PC-9 (cell line): ENCODE measurements at regions of chr6 and their contacts with region 1.

Region 1: DNA sequence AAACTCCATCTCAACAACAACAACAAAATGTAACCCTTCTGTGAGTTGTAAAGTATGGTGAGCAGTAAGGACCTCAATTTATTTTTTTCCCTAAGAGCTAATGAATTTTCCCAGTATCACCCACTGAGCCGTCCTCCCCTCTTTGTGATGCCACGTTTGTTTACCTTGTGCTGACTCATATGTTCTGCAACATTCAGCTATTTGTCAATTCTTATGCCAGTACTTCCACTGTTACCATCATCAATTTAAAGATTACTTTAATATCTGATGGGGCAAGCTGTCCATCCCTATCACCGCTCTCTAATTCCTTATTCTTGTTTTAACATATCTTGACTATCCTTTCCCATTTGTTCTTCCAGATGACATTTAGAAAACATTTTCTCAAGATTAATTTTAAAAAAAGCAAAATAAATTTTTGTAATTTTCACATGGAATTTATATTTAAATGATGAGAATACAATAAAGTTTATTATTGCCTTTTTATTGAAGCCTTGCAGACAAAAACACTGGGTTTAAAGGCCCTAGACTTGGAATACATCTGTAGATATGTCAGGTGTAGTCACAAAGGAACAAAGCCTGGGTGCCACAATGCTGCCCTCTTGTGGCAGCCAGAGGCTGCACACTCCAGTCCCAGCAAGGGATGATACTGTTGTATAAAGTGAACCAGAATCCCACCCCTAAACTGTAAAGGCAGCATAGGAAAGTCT is 37.4 kb downstream of the MAK start:
- DNase-seq: peak; percentile 66 to 70
- H3K4me3 ChIP-seq: no peak overlapping the region
- H3K27ac ChIP-seq: peak overlapping the region; percentile 41; the same call in 1 of the 2 replicates
- H3K4me1 ChIP-seq: peaks cover 8% of the 10 kb centered on the region
- H3K27me3 ChIP-seq: no peaks in the 10 kb centered on the region
- CTCF ChIP-seq: peak; percentile 94

Region 2: GRCh38 chr6:10434692-10435376 is 366.1 kb before region 1 on chr6:
- CTCF ChIA-PET with region 1: no interaction called
- POLR2A ChIA-PET with region 1: no interaction called
- intact Hi-C with region 1: loop called (anchors 2 kb)
- DNase-seq: no peak
- H3K4me3 ChIP-seq: no peak overlapping the region; the same call in 1 of the 2 replicates
- H3K27ac ChIP-seq: no peak overlapping the region
- H3K4me1 ChIP-seq: no peaks in the 10 kb centered on the region
- H3K27me3 ChIP-seq: no peaks in the 10 kb centered on the region
- CTCF ChIP-seq: peak; percentile 72

Region 3: DNA sequence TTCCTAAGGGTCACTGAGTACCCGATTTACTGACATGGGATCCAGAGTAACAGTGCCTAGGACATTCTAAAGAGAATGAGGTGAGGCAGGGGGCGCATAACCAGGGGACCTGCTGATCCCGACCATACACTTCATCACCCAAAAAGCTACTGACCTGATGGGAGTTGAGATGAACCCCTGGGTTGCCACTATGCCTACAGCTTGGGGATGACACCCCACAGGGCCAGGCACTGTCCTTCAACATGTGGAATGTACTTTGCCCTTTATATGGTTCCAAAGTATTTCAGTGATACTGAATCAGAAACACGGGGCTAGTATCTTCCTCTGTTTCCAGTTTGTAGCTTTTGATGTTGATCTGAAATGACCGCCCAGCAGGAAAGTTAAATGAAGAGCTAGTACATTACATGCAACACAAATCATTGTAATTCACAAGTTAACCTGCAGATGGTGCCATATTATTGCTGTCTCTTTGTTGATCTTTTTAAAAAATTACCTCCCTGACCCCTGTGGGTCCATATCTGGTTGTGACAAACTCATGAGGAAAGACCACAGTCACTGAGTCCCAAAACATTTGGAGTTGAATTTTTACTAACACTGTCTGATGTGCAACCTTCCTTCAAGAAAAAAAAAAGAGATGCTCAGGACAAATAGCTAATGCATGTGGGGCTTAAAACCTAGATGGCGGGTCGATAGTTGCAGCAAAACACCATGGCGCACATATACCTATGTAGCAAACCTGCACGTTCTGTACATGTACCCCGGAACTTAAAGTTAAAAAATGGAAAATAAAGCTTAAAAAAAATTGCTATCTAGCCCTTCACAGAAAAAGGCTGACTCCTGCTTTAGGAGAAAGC is 322.6 kb before region 1 on chr6:
- CTCF ChIA-PET with region 1: interaction called, 10 read pairs
- POLR2A ChIA-PET with region 1: interaction called, 20 read pairs
- intact Hi-C with region 1: loop called (anchors 1 kb)
- DNase-seq: peak; percentile 8 to 37
- H3K4me3 ChIP-seq: no peak overlapping the region
- H3K27ac ChIP-seq: no peak overlapping the region
- H3K4me1 ChIP-seq: peaks cover 11% of the 10 kb centered on the region
- H3K27me3 ChIP-seq: no peaks in the 10 kb centered on the region
- CTCF ChIP-seq: peak; percentile 78

Region 4: DNA sequence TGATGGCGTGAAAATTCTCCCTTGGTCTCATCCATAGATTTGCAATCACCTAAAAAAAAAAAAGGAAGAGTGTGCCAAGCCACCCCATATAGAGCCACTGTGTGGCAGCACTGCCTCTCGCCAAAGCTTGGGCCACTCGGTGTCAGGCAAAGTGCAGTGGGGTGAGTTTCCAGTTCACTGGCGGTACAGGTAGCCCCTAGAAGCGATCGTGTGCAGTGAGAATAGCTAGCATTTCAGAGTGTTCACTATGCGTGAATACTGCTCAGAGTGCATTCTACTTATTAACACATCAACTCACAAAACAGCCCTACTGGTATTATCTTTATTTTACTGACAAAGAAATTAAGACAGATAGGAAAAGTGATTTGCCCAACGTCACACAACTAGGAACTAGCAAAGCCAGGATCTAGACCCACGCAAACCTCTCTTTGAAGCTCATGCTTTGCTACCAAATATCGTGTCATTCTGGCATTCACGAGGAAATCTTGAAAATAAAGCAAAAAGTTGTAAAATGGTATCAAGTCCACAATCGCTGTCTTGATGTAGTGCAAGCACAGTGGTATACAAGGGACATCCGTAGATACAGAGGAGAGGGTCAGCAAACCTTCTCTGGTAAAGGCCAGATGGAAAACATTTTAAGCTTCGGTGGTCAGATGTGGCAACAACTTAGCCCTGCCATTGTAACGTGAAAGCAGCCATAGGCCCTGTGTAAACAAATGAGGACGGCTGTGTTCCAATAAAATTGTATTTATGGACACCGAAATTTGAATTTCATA is 290.2 kb before region 1 on chr6:
- CTCF ChIA-PET with region 1: interaction called, 4 read pairs
- POLR2A ChIA-PET with region 1: no interaction called
- intact Hi-C with region 1: loop called (anchors 1 kb)
- DNase-seq: peak in 1 of 2 experiments; percentile 72
- H3K4me3 ChIP-seq: no peak overlapping the region; the same call in 1 of the 2 replicates
- H3K27ac ChIP-seq: no peak overlapping the region
- H3K4me1 ChIP-seq: peaks cover 10% of the 10 kb centered on the region; the same call in 1 of the 2 replicates
- H3K27me3 ChIP-seq: no peaks in the 10 kb centered on the region
- CTCF ChIP-seq: peak; percentile 72

Region 5: DNA sequence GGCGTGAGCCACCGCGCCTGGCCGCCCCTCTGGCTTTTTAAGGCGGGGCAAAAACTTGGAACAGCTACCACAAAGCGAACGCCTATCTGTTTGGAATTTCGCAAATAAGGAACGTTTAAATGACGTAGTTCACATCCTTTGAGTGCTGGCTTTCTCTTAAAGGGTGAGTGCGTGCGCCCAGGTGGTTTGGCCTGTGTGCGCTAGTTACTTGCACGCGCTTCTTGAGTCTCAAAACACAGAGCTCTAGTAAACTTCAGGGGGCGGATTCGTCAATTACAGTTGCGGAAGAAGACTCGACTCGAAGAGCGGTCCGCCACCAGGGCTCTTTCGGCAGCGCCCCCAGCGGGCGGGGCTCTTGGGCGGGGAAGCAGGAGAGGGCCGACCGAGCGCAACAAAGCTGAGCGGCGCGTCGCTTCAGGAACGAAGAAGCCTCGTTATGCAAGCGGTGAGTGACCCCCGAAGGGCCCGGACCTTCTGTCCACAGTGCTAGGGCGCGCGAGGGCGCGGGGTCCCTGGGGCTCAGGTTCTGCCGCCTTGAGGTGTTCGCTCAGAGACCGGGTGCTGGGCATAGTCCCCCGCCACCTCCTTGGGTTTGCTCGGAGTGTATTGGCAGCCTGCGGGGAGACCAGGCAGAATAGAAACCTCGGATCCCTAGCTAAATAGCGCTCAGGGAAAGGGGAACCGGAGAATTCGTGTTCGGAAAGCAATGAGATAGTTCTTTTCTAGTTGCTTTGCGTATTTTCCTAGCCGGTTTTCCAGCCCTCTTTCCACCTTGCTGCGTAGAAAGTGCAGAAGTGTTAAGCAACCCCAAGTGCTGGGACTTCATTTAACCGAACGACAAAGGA is 85.9 kb after region 1 on chr6 and contains the start of gene SYCP2L:
- CTCF ChIA-PET with region 1: no interaction called
- POLR2A ChIA-PET with region 1: no interaction called
- intact Hi-C with region 1: loop called (anchors 1 kb)
- DNase-seq: peak; percentile 80 to 90
- H3K4me3 ChIP-seq: peak within 1 kb of the TSS; percentile 81
- H3K27ac ChIP-seq: peak within 1 kb of the TSS; percentile 81
- H3K4me1 ChIP-seq: peaks cover 11% of the 10 kb centered on the region; the same call in 1 of the 2 replicates
- H3K27me3 ChIP-seq: no peaks in the 10 kb centered on the region
- CTCF ChIP-seq: peak; percentile 41; the same call in 1 of the 2 replicates
- total RNA-seq, gene SYCP2L: 12.6 and 15.7 TPM in 2 replicates

Region 6: GRCh38 chr6:11575408-11576033 is 774.5 kb after region 1 on chr6:
- CTCF ChIA-PET with region 1: no interaction called
- POLR2A ChIA-PET with region 1: no interaction called
- intact Hi-C with region 1: loop called (anchors 10 kb)
- DNase-seq: peak; percentile 75 to 86
- H3K4me3 ChIP-seq: no peak overlapping the region
- H3K27ac ChIP-seq: no peak overlapping the region
- H3K4me1 ChIP-seq: peaks cover 3% of the 10 kb centered on the region
- H3K27me3 ChIP-seq: no peaks in the 10 kb centered on the region
- CTCF ChIP-seq: peak; percentile 99